Prostate gland (tissue), 2 donors: ENCODE measurements at regions of chr3 and their contacts with region 1.

Region 1: GRCh38 chr3:48685602-48686511 is at the start of gene NCKIPSD:
- DNase-seq: peak; percentile 86
- H3K4me3 ChIP-seq: peak within 1 kb of the TSS; percentile 89 to 95
- H3K27ac ChIP-seq: peak within 1 kb of the TSS; percentile 90 to 91
- H3K4me1 ChIP-seq: peaks cover 3% of the 10 kb centered on the region
- H3K27me3 ChIP-seq: no peaks in the 10 kb centered on the region
- CTCF ChIP-seq: peak; percentile 83 to 93 (median 88)
- POLR2A ChIP-seq: peak; percentile 81
- total RNA-seq, gene NCKIPSD: 32.9 to 83.3 TPM

Region 2: GRCh38 chr3:48492543-48493501 is 193.0 kb before region 1 on chr3:
- intact Hi-C with region 1: no loop called
- DNase-seq: peak; percentile 88
- H3K4me3 ChIP-seq: no peak overlapping the region
- H3K27ac ChIP-seq: peak overlapping the region; percentile 55 to 70
- H3K4me1 ChIP-seq: no peaks in the 10 kb centered on the region
- H3K27me3 ChIP-seq: no peaks in the 10 kb centered on the region
- CTCF ChIP-seq: no peak
- POLR2A ChIP-seq: no peak

Region 3: GRCh38 chr3:48581621-48582481 is 104.0 kb before region 1 on chr3:
- intact Hi-C with region 1: no loop called
- DNase-seq: no peak
- H3K4me3 ChIP-seq: no peak overlapping the region
- H3K27ac ChIP-seq: no peak overlapping the region
- H3K4me1 ChIP-seq: no peaks in the 10 kb centered on the region
- H3K27me3 ChIP-seq: no peaks in the 10 kb centered on the region
- CTCF ChIP-seq: no peak
- POLR2A ChIP-seq: no peak

Region 4: DNA sequence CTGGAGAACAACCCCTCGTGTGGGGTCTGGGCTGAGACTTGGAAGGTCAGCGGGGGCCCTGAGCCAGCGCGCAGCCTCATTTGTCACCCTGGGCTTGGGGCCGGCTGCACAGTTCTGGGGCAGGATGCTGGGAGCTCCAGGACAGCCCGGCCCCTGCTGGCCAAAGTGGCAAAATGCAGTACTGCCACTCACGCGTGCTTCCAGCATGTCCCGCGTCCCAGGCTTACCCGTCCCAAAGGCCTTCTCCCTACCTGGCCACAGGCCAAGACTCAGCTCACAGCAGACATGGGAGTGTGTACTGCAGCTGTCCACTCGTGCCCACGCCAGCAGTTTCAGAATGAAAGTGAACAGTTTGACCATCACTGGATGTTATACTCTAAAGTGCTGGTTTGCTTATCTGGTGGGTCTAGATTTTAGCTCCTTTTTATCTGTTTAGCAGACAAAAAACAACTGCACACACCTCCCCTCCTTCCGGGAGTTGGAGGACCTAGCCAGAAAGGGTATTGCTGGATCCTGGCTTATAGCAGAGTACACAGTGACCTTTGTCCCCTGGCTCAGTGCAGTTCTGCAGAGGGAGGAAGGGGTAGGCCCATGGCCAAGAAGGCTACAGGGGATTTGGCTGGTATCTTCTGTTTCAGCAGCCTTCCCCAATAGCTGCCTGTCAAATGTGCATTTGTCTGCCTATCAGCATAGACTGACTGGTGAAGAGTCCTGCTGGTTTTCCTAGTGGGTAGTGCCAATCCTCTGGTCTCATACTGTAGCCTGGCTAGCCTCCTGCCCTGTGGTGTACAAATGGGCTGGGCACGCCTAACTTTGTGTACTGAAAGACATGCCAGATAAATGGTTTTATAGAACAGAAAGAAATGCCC is 54.3 kb after region 1 on chr3:
- intact Hi-C with region 1: loop called (anchors 2 kb)
- DNase-seq: peak; percentile 68
- H3K4me3 ChIP-seq: no peak overlapping the region
- H3K27ac ChIP-seq: peak overlapping the region; percentile 73 to 75
- H3K4me1 ChIP-seq: peaks cover 32% of the 10 kb centered on the region
- H3K27me3 ChIP-seq: no peaks in the 10 kb centered on the region
- CTCF ChIP-seq: peak; percentile 50 to 80 (median 63)
- POLR2A ChIP-seq: no peak

Region 5: GRCh38 chr3:48847504-48848423 is 161.9 kb after region 1 on chr3 and contains the start of gene PRKAR2A:
- intact Hi-C with region 1: loop called (anchors 5 kb)
- DNase-seq: peak; percentile 88
- H3K4me3 ChIP-seq: peak within 1 kb of the TSS; percentile 91 to 92
- H3K27ac ChIP-seq: peak within 1 kb of the TSS; percentile 97
- H3K4me1 ChIP-seq: peaks cover 11% of the 10 kb centered on the region
- H3K27me3 ChIP-seq: no peaks in the 10 kb centered on the region
- CTCF ChIP-seq: peak in 1 of 4 experiments; percentile 7
- POLR2A ChIP-seq: peak; percentile 82
- total RNA-seq, gene PRKAR2A: 33.7 to 35.3 TPM

Region 6: DNA sequence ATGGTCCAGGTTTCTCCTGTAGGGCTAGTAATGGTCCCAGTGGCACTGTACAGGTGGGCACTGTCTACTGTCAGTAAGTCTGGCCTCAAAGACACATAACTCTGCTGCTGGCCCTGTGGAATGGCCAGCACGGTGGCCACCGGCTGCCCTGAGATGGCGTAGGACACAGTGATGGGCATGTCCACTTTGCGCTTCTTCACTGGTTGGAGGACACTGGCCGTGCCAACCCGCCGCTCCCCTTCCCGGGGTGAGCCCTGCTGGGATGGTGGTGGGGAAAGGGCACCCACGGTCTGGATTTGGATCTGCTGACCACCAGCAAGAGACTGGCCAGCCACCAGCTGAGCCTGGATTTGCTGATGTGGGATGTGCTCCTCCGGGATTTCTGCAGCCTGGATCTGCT is 371.4 kb after region 1 on chr3:
- intact Hi-C with region 1: no loop called
- DNase-seq: no peak
- H3K4me3 ChIP-seq: no peak overlapping the region
- H3K27ac ChIP-seq: no peak overlapping the region
- H3K4me1 ChIP-seq: no peaks in the 10 kb centered on the region
- H3K27me3 ChIP-seq: no peaks in the 10 kb centered on the region
- CTCF ChIP-seq: no peak
- POLR2A ChIP-seq: no peak